ENCODE measurements at regions of chr1 and their contacts with region 1.

Region 1: DNA sequence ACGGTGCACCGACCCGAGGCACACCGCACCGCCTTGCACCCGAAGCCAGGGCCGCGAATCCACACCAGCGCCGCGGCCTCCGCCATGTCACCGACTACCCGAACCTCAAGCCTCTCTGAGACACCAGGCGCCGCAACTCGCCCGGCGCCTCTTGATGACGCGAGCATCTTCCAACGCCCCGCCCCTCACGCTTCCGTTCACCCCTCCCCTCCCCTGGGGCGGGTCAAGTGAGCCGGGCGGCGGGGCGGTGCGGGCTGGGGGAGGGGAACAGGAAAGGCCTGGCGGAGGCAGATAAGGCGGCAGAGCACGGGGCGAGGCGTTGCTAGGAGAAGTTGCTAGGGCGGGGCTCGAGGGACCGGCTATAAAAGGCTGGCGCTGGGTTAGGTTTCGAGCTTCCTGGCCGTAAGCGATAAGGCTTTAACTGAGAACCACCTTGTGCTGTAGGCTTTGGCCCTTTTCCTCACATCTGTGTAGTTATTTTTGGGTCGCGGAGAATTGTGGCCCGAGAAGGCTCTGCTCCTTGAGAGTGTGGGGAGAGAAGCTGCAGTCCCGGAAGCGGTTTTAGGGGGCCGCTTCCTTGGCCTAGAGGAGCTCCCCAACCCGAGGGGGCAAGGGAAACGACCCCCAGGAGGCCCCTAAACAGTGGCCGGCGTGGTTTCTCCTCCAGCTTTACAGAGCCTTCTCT is at the start of gene SDE2:
- DNase-seq: peak; percentile 100
- H3K4me3 Mint-ChIP-seq: peak within 1 kb of the TSS; percentile 100
- H3K27ac Mint-ChIP-seq: peak within 1 kb of the TSS; percentile 99
- H3K4me1 Mint-ChIP-seq: peaks cover 55% of the 10 kb centered on the region
- H3K27me3 Mint-ChIP-seq: no peaks in the 10 kb centered on the region
- total RNA-seq, gene SDE2: 22.0 and 22.3 TPM in 2 replicates

Region 2: DNA sequence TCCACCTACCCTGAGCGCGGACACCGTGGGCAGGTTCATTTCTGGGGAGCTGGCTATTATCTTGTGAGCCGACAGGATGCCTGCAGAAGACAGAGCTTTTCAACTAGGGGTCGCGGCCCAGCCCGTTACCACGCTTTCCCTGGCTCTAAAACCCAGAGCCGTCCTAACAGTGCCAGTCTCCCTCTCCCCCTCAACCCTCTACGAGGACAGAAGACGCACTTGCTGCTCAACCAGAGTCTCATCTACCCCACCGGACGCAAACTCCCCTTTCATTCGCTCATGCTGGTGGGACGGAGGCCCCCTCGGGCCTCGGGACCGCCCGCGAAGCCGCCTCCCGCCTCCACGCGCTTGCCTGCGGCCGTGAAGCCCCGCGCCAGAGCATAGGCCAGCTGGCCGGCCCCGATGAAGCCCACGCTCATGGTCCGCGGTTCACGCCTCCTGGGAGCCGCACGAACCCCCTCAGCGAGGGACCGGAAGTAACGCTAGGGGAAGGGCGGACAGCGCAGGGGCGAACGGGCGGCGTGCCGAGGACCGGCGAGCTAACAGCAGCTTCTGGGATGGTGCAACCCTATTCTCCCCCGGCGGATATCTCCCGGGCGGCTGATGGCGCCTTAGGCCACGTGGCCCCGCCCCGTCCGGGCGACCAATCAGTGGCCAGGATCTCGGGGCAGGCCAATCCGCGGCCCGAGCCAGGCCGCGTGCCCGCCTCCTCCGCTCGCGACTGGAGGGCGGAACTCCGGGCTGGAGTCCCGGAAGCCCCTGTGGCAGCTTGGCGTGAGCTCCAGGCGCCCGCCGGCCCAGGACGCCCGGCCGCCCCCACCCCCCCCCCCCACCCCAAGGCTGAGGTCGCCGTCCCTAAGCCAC is 75.4 kb before region 1 on chr1 and contains the start of gene PYCR2:
- intact Hi-C with region 1: loop called (anchors 2 kb)
- DNase-seq: peak; percentile 94
- H3K4me3 Mint-ChIP-seq: peak within 1 kb of the TSS; percentile 92
- H3K27ac Mint-ChIP-seq: peak within 1 kb of the TSS; percentile 91
- H3K4me1 Mint-ChIP-seq: peaks cover 43% of the 10 kb centered on the region
- H3K27me3 Mint-ChIP-seq: no peaks in the 10 kb centered on the region
- total RNA-seq, gene PYCR2: 117 and 121 TPM in 2 replicates

Region 3: GRCh38 chr1:226166341-226166740 is 167.0 kb after region 1 on chr1:
- intact Hi-C with region 1: no loop called
- DNase-seq: no peak
- H3K4me3 Mint-ChIP-seq: no peak overlapping the region
- H3K27ac Mint-ChIP-seq: no peak overlapping the region
- H3K4me1 Mint-ChIP-seq: peaks cover 3% of the 10 kb centered on the region
- H3K27me3 Mint-ChIP-seq: no peaks in the 10 kb centered on the region

Measured in activated T-helper 2 cell treated with anti-CD3 and anti-CD28 coated beads, Interferon-gamma antibody, Interleukin-2, Interleukin-4, amounts not matched to agents 10 μg/mL and 5 μg/mL and 100 μg/mL, durations not matched to agents 14 hours and 24 hours and 36 hours (primary cell).